K562 (cell line): ENCODE measurements at regions of chr16 and their contacts with region 1.

Region 1: GRCh38 chr16:57802341-57803133 is at the start of gene KIFC3:
- DNase-seq: peak; percentile 88 to 94 (median 92)
- ATAC-seq: peak; percentile 71
- H3K4me3 ChIP-seq: peak within 1 kb of the TSS; percentile 61
- H3K27ac ChIP-seq: peak within 1 kb of the TSS; percentile 86
- H3K4me1 ChIP-seq: peaks cover 54 to 55% of the 10 kb centered on the region in 2 experiments
- H3K27me3 ChIP-seq: no peaks in the 10 kb centered on the region
- CTCF ChIP-seq: peak in 2 of 3 experiments; percentile 37 to 59; a peak in 3 of 6 replicates
- EP300 ChIP-seq: no peak; the same call in 1 of the 2 replicates
- POLR2A ChIP-seq: peak; percentile 69; the same call in 1 of the 2 replicates
- RAD21 ChIP-seq: peak in 1 of 2 experiments; percentile 61; a peak in 3 of 4 replicates
- polyA plus RNA-seq, gene KIFC3: 0.23 to 0.96 TPM

Region 2: DNA sequence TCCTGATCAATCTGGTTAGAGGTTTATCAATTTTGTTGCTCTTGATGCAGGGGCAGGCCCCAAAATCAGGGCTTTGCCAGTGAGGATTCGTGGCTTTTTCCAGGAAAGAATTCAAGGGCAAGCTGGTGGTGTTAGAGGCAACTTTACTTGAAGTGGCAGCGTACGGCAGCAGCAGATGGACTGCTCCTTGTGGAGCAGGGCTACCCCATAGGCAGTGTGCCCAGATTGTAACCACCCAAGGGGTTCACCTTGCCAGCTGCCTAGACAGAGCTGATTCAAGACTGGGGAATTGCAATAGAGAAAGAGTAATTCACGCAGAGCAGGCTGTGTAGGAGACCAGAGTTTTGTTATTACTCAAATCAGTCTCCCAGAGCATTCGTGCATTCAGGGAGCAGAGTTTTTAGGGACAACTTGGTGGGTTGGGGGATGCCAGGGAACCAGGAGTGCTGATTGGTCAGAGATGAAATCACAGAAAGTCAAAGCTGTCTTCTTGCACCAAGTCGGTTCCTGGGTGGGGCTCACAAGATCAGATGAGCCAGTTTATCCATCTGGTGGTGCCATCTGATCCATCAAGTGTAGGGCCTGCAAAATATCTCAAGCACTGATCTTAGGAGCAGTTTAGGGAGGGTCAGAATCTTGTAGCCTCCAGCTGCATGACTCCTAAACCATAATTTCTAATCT is 91.1 kb before region 1 on chr16:
- CTCF ChIA-PET with region 1: no interaction called
- POLR2A ChIA-PET with region 1: no interaction called
- in situ Hi-C with region 1: no loop called
- intact Hi-C with region 1: no loop called
- DNase-seq: no peak
- ATAC-seq: no peak
- H3K4me3 ChIP-seq: no peak overlapping the region
- H3K27ac ChIP-seq: no peak overlapping the region
- H3K4me1 ChIP-seq: peaks cover 6 to 16% of the 10 kb centered on the region in 2 experiments; a peak in 4 of 5 replicates
- H3K27me3 ChIP-seq: peaks cover 10 to 36% of the 10 kb centered on the region in 2 experiments; a peak in 4 of 5 replicates
- CTCF ChIP-seq: no peak
- EP300 ChIP-seq: no peak
- POLR2A ChIP-seq: no peak
- RAD21 ChIP-seq: no peak

Region 3: GRCh38 chr16:57786632-57787518 is 15.7 kb before region 1 on chr16:
- CTCF ChIA-PET with region 1: interaction called, 3 read pairs
- POLR2A ChIA-PET with region 1: interaction called, 20 read pairs
- in situ Hi-C with region 1: no loop called
- intact Hi-C with region 1: no loop called
- DNase-seq: no peak
- ATAC-seq: peak; percentile 60
- H3K4me3 ChIP-seq: no peak overlapping the region
- H3K27ac ChIP-seq: no peak overlapping the region
- H3K4me1 ChIP-seq: peaks cover 0 to 23% of the 10 kb centered on the region in 2 experiments; a peak in 1 of 5 replicates
- H3K27me3 ChIP-seq: no peaks in the 10 kb centered on the region
- CTCF ChIP-seq: no peak
- EP300 ChIP-seq: no peak
- POLR2A ChIP-seq: no peak
- RAD21 ChIP-seq: no peak